ENCODE measurements at regions of chr12 and their contacts with region 1.

Region 1: GRCh38 chr12:46516933-46517578 is 144.5 kb upstream of the SLC38A2 start:
- DNase-seq: peak; percentile 49
- ATAC-seq: peak; percentile 93
- H3K4me3 Mint-ChIP-seq: peak overlapping the region; percentile 3
- H3K27ac Mint-ChIP-seq: peak overlapping the region; percentile 90
- H3K4me1 Mint-ChIP-seq: peaks cover 61% of the 10 kb centered on the region
- H3K27me3 Mint-ChIP-seq: no peaks in the 10 kb centered on the region

Region 2: GRCh38 chr12:46382964-46383653 is 133.9 kb before region 1 on chr12:
- CTCF ChIA-PET with region 1: interaction called, 3 read pairs
- POLR2A ChIA-PET with region 1: no interaction called
- intact Hi-C with region 1: loop called in 1 of 2 experiments (anchors 1 kb)
- DNase-seq: peak; percentile 97
- ATAC-seq: peak; percentile 83
- H3K4me3 Mint-ChIP-seq: peak overlapping the region; percentile 74
- H3K27ac Mint-ChIP-seq: peak overlapping the region; percentile 89
- H3K4me1 Mint-ChIP-seq: peaks cover 39% of the 10 kb centered on the region
- H3K27me3 Mint-ChIP-seq: no peaks in the 10 kb centered on the region

Region 3: DNA sequence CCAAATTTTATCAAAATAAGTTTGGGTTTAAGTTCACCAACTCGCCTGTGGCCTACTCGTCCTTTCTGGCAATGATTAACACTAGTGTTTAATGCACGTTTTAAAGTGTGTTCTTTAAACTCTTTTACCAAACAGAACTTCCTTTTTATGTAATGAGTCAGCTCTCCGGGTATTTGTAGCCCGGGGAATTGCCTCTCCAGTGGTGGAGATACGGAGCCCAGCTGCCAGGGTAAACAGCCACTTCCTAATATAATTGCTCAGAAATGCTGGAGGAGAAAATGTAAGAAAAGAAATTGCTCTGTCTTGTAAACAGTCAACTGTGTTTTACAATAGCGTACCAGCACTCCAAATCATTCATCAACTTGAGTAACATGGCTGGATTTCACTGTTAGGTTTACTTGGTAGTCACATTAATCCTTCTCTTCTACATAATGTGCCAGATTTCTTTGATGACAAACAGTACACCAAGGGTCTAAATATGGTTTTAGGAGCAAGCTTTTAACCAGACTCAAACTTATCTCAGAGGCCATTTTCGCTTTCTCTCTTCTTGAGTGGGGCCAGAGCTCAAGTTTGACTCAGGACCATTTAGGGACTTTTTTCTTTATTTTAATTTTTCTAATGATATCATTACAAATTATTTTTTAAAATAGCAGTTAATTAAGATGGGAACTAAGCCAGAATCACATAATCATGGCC is 43.3 kb before region 1 on chr12:
- CTCF ChIA-PET with region 1: interaction called, 3 read pairs
- POLR2A ChIA-PET with region 1: no interaction called
- intact Hi-C with region 1: loop called in 1 of 2 experiments (anchors 5 kb)
- DNase-seq: no peak
- ATAC-seq: no peak
- H3K4me3 Mint-ChIP-seq: no peak overlapping the region
- H3K27ac Mint-ChIP-seq: peak overlapping the region; percentile 69
- H3K4me1 Mint-ChIP-seq: peaks cover 19% of the 10 kb centered on the region
- H3K27me3 Mint-ChIP-seq: no peaks in the 10 kb centered on the region

Region 4: GRCh38 chr12:46556105-46556559 is 39.1 kb after region 1 on chr12:
- CTCF ChIA-PET with region 1: no interaction called
- POLR2A ChIA-PET with region 1: no interaction called
- intact Hi-C with region 1: loop called in 1 of 2 experiments (anchors 5 kb)
- DNase-seq: no peak
- ATAC-seq: no peak
- H3K4me3 Mint-ChIP-seq: no peak overlapping the region
- H3K27ac Mint-ChIP-seq: no peak overlapping the region
- H3K4me1 Mint-ChIP-seq: peaks cover 41% of the 10 kb centered on the region
- H3K27me3 Mint-ChIP-seq: no peaks in the 10 kb centered on the region